H1 (cell line): ENCODE measurements at regions of chr7 and their contacts with region 1.

Region 1: DNA sequence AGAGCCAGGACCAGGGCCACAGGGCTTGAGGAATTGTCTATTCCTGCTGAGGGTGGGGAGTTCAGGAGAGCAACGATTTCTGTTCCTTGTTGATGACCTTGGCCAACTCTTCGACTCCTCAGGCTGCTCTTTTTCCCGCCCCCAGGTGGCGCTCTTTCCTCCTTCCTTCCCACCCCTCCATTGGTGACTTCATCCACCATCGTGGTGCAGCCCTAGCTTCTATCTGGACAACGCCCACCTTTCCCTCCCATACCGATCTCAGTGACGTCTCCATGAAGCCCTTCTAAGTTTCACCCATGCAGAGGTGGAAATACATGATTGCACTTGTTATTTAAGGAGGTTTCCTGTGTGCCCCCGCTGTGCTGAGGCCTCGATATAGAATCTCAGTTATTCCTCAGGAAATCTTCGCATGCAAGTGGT is 22.1 kb upstream of the CARD11 start:
- DNase-seq: peak; percentile 51 to 89
- H3K4me3 ChIP-seq: no peak overlapping the region
- H3K27ac ChIP-seq: no peak overlapping the region
- H3K4me1 ChIP-seq: peaks cover 0 to 4% (median 0%) of the 10 kb centered on the region in 4 experiments; a peak in 2 of 7 replicates
- H3K27me3 ChIP-seq: no peaks in the 10 kb centered on the region
- CTCF ChIP-seq: peak; percentile 78 to 95 (median 84)
- EP300 ChIP-seq: no peak
- POLR2A ChIP-seq: no peak
- RAD21 ChIP-seq: peak; percentile 69 to 79

Region 2: GRCh38 chr7:3028071-3028757 is 37.5 kb before region 1 on chr7:
- CTCF ChIA-PET with region 1: no interaction called
- POLR2A ChIA-PET with region 1: no interaction called
- DNase-seq: no peak
- H3K4me3 ChIP-seq: no peak overlapping the region
- H3K27ac ChIP-seq: no peak overlapping the region
- H3K4me1 ChIP-seq: peaks cover 0 to 5% (median 3%) of the 10 kb centered on the region in 4 experiments; a peak in 5 of 7 replicates
- H3K27me3 ChIP-seq: no peaks in the 10 kb centered on the region
- CTCF ChIP-seq: no peak
- EP300 ChIP-seq: no peak
- POLR2A ChIP-seq: no peak
- RAD21 ChIP-seq: no peak

Region 3: GRCh38 chr7:3078514-3078913 is 12.8 kb after region 1 on chr7:
- CTCF ChIA-PET with region 1: interaction called, 22 read pairs
- POLR2A ChIA-PET with region 1: no interaction called
- DNase-seq: no peak
- H3K4me3 ChIP-seq: no peak overlapping the region
- H3K27ac ChIP-seq: no peak overlapping the region
- H3K4me1 ChIP-seq: no peaks in the 10 kb centered on the region; a peak in 1 of 7 replicates
- H3K27me3 ChIP-seq: no peaks in the 10 kb centered on the region
- CTCF ChIP-seq: no peak
- EP300 ChIP-seq: no peak
- POLR2A ChIP-seq: no peak
- RAD21 ChIP-seq: no peak

Region 4: GRCh38 chr7:3087243-3087642 is 21.5 kb after region 1 on chr7:
- CTCF ChIA-PET with region 1: interaction called, 31 read pairs
- POLR2A ChIA-PET with region 1: no interaction called
- DNase-seq: no peak
- H3K4me3 ChIP-seq: no peak overlapping the region
- H3K27ac ChIP-seq: no peak overlapping the region
- H3K4me1 ChIP-seq: peaks cover 0 to 2% (median 1%) of the 10 kb centered on the region in 4 experiments; a peak in 2 of 7 replicates
- H3K27me3 ChIP-seq: no peaks in the 10 kb centered on the region
- CTCF ChIP-seq: no peak
- EP300 ChIP-seq: no peak
- POLR2A ChIP-seq: no peak
- RAD21 ChIP-seq: no peak

Region 5: DNA sequence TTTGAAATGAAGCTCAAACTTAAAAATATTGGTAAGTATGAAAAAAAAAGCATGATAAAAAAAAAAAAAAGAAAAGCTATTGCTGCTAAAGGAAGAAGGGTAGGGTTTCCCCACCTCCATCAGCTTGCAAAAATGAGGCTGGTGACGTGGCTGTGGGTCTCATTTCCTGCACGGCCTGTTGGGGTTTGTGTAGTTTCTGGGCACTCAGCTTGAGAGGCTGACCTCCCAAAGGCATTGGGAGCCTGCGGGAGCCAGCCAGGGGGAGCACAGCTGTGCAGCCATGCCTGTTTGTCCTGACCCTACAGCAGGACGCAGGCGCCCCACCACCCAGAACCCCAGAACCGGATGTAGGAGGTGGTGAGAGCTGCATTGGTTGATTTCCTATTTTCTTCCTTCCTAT is 26.7 kb after region 1 on chr7:
- CTCF ChIA-PET with region 1: interaction called, 31 read pairs
- POLR2A ChIA-PET with region 1: no interaction called
- DNase-seq: no peak
- H3K4me3 ChIP-seq: no peak overlapping the region
- H3K27ac ChIP-seq: no peak overlapping the region
- H3K4me1 ChIP-seq: peaks cover 0 to 2% (median under 1%) of the 10 kb centered on the region in 4 experiments; a peak in 2 of 7 replicates
- H3K27me3 ChIP-seq: no peaks in the 10 kb centered on the region
- CTCF ChIP-seq: no peak
- EP300 ChIP-seq: no peak
- POLR2A ChIP-seq: no peak
- RAD21 ChIP-seq: no peak

Region 6: DNA sequence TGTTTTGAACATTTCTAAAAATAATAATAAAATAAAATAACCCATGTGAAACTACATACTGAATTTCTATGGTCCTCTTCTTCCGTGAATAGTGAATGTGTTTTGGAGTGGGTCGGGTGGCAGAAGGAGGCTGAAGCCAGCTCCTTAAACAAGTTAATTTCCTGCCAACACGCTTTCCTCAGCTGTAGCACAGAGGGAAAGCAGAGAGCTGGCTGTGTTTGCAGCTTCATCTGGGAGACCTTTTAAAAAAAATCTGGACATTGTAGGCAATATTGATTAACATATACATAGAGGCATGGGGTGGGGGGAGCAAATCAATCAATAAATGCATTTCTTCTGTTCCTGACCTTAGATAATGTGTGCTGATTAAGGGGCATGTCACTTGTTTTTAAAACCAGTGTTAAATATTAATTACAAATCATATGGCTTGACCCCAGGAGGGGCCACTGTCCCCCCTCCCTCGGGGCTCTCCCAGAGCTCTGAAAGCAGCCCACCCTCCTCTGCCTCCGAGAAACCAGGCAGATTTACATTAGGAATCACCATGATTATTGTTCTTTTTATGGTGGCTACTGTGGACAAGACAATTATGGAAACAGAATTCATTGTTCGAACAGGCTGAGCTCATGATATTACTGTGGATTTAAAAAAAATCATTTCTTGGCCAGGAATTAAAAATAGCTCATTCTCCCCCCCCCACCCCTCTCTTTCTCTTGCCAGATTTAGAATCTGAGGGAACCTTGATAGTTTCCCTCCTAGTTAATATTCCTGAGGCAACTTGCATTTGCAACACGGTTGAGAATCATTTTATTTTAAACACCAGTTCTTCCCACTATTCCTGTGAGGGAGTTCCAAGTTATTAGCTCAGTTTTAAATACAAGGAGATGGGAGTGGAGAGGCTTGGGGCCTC is 78.4 kb after region 1 on chr7:
- CTCF ChIA-PET with region 1: interaction called, 12 read pairs
- POLR2A ChIA-PET with region 1: no interaction called
- DNase-seq: no peak
- H3K4me3 ChIP-seq: no peak overlapping the region
- H3K27ac ChIP-seq: no peak overlapping the region
- H3K4me1 ChIP-seq: no peaks in the 10 kb centered on the region
- H3K27me3 ChIP-seq: no peaks in the 10 kb centered on the region
- CTCF ChIP-seq: no peak
- EP300 ChIP-seq: no peak
- POLR2A ChIP-seq: no peak
- RAD21 ChIP-seq: no peak

Region 7: DNA sequence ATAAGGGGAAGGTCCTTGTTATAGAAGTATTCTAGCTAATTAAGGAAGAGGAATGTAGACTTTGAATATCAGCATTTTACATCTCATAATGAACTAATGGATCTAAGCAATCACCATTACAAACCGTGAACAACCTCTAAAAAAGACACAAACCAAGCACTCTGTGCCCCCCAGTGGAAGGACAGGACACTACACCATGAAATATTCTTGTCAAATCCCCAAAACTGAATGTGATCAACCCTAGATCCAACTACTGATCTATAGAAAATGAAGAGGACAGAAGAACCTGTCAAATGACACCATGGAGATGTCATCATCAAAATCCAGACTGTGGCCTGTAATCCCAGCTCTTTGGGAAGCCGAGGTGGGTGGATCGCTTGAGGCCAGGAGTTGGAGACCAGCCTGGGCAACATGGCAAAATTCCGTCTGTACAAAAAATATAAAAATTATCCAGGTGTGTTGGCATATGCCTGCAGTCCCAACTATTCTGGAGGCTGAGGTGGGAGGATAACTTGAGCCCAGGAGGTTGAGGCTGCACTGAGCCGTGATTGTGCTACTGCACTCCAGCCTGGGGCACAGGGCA is 89.3 kb after region 1 on chr7:
- CTCF ChIA-PET with region 1: interaction called, 15 read pairs
- POLR2A ChIA-PET with region 1: no interaction called
- DNase-seq: no peak
- H3K4me3 ChIP-seq: no peak overlapping the region
- H3K27ac ChIP-seq: no peak overlapping the region
- H3K4me1 ChIP-seq: peaks cover 0 to 6% (median 2%) of the 10 kb centered on the region in 4 experiments; a peak in 3 of 7 replicates
- H3K27me3 ChIP-seq: no peaks in the 10 kb centered on the region
- CTCF ChIP-seq: peak in 2 of 3 experiments; percentile 59 to 74; a peak in 3 of 4 replicates
- EP300 ChIP-seq: no peak
- POLR2A ChIP-seq: no peak
- RAD21 ChIP-seq: peak; percentile 81 to 84

Region 8: GRCh38 chr7:3200504-3200903 is 134.8 kb after region 1 on chr7:
- CTCF ChIA-PET with region 1: interaction called, 11 read pairs
- POLR2A ChIA-PET with region 1: no interaction called
- DNase-seq: peak; percentile 41 to 71
- H3K4me3 ChIP-seq: no peak overlapping the region
- H3K27ac ChIP-seq: no peak overlapping the region
- H3K4me1 ChIP-seq: peaks cover 3 to 12% (median 8%) of the 10 kb centered on the region in 4 experiments; a peak in 6 of 7 replicates
- H3K27me3 ChIP-seq: no peaks in the 10 kb centered on the region
- CTCF ChIP-seq: peak; percentile 42 to 81 (median 72)
- EP300 ChIP-seq: no peak
- POLR2A ChIP-seq: no peak
- RAD21 ChIP-seq: peak; percentile 81 to 89